ENCODE measurements at regions of chr6 and their contacts with region 1.

Region 1: DNA sequence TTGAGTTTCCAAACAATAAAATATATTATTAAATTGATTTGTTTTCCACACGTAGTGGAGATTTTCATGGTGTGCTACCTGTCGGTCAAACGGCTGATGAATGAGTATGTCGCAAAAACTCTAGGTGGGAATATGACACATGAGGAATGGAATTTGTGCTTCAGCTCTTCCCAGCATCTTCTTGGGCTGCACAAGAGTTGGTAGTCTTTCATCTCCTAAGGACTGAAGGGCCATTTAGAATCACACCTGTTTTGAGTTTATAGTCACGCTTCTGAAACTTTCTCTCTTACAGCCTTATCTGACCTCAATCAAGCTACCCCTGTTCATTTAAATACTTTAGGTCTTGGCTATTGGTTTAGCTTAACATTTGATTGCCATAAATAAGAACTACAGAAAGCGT is 157.7 kb upstream of the AKAP12 start:
- DNase-seq: peak; percentile 15 to 92
- H3K4me3 ChIP-seq: peak overlapping the region; percentile 40; the same call in 1 of the 2 replicates
- H3K27ac ChIP-seq: peak overlapping the region; percentile 93
- H3K4me1 ChIP-seq: peaks cover 33% of the 10 kb centered on the region
- H3K27me3 ChIP-seq: no peaks in the 10 kb centered on the region
- CTCF ChIP-seq: no peak; the same call in 1 of the 2 replicates

Region 2: DNA sequence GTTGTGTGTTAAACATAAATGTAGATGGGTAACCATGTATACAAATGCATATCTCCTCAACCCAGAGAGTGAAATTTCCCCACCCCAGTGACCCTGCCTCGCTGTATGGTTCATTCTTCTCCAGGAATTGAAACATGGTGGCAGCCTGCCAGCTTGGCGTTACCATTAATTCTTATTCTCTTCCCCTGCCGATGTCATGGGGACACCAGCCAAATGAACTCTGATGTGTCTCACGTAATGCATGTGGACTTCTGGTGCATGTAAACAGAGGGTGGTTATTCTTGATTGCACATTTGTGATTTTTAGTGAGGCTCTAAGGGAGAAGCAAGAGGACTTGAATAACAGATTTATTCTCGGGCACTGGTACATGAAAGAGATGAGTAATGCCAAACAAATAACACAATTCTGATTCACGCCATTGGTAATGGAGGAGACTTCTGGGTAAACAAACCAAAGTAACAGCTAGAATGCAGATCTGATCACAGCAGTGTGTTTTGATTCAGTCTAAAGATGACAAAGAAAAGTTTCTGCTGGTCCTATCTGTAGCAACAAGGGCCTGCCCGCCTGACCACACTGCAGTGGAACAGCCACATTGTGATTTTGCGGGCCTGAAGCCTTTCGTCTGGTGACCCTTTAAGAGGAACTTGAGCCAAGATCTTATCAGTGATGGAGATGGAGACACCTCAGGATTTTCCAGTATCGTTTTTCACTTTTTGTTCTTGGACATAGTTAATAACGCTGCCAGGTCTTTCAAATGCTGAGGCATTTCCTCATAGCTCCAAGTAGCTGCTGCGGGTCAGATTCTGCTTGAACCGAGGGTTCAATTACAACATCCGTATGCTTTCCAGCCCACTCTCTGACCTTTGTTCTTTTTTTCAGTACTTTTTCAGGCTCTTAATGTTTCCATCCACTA is 14.1 kb before region 1 on chr6:
- CTCF ChIA-PET with region 1: no interaction called
- POLR2A ChIA-PET with region 1: interaction called, 5 read pairs
- intact Hi-C with region 1: loop called (anchors 1 kb)
- DNase-seq: peak; percentile 72 to 99
- H3K4me3 ChIP-seq: peak overlapping the region; percentile 37; the same call in 1 of the 2 replicates
- H3K27ac ChIP-seq: peak overlapping the region; percentile 98
- H3K4me1 ChIP-seq: peaks cover 75% of the 10 kb centered on the region
- H3K27me3 ChIP-seq: no peaks in the 10 kb centered on the region
- CTCF ChIP-seq: no peak

Region 3: GRCh38 chr6:151148111-151148510 is 66.0 kb after region 1 on chr6:
- CTCF ChIA-PET with region 1: no interaction called
- POLR2A ChIA-PET with region 1: no interaction called
- intact Hi-C with region 1: no loop called
- DNase-seq: no peak
- H3K4me3 ChIP-seq: no peak overlapping the region
- H3K27ac ChIP-seq: no peak overlapping the region
- H3K4me1 ChIP-seq: no peaks in the 10 kb centered on the region
- H3K27me3 ChIP-seq: no peaks in the 10 kb centered on the region
- CTCF ChIP-seq: no peak

Measured in PC-9 (cell line).